Heart right ventricle (tissue), 16 donors: ENCODE measurements at regions of chr1 and their contacts with region 1.

Region 1: GRCh38 chr1:92679980-92680379 is 104.9 kb downstream of the EVI5 start:
- DNase-seq: no peak
- ATAC-seq: no peak
- H3K4me3 ChIP-seq: no peak overlapping the region
- H3K27ac ChIP-seq: no peak overlapping the region
- H3K4me1 ChIP-seq: no peaks in the 10 kb centered on the region
- H3K27me3 ChIP-seq: no peaks in the 10 kb centered on the region
- CTCF ChIP-seq: no peak

Region 2: GRCh38 chr1:92623187-92623778 is 56.7 kb before region 1 on chr1:
- intact Hi-C with region 1: no loop called
- DNase-seq: no peak
- ATAC-seq: no peak
- H3K4me3 ChIP-seq: no peak overlapping the region
- H3K27ac ChIP-seq: no peak overlapping the region
- H3K4me1 ChIP-seq: no peaks in the 10 kb centered on the region
- H3K27me3 ChIP-seq: no peaks in the 10 kb centered on the region
- CTCF ChIP-seq: peak in 8 of 9 donors; percentile 6 to 58 (median 40)

Region 3: GRCh38 chr1:92728697-92729096 is 48.7 kb after region 1 on chr1:
- intact Hi-C with region 1: loop called in 1 of 10 experiments (anchors 10 kb)
- DNase-seq: no peak
- ATAC-seq: no peak
- H3K4me3 ChIP-seq: no peak overlapping the region
- H3K27ac ChIP-seq: no peak overlapping the region
- H3K4me1 ChIP-seq: peaks cover 0 to 10% (median 0%) of the 10 kb centered on the region in 9 donors
- H3K27me3 ChIP-seq: no peaks in the 10 kb centered on the region
- CTCF ChIP-seq: no peak